ENCODE measurements at regions of chr19 and their contacts with region 1.

Region 1: DNA sequence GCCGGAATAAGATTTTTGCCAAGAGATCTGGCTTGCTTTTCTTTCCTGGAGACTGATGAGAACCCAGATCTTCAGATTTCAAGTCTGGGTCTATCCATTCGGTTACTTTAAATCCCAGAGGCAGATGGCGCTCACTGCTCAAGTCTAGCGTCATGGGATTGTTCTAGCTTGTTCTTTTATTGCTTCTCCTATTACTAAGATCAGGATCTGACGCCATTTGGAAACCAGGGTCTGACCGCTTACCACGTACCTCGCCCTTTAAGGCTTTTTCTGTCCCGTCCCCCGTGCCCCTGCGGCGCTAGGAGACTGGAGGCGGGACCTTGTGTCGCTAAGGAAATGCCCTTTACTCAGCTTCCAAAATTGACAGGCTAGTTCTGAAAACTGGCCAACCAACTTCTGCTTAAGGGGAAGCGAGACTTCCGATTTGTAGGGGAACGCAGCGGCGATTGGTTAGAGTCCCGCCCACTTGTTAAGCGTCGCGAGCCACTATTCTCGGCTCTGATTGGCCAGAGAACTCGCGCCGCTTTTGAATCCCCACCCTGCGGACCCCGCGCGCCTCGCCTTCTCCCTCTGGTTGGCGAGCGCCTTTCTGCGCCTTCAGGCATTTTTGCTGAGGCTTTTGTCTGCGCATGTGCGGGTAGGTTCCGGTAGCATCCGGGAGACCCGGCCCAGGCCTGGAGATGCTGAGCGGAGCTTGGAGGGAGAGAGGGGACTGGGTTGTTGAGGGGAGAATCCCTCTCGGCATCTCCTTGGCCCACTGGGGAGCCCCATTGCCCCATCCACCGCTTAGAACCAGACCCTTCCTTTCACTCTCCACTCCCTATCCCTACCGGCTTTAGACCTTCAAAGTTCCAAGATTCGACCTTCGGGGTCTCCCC is 3.8 kb upstream of the C19orf84 start:
- DNase-seq: peak; percentile 93

Region 2: DNA sequence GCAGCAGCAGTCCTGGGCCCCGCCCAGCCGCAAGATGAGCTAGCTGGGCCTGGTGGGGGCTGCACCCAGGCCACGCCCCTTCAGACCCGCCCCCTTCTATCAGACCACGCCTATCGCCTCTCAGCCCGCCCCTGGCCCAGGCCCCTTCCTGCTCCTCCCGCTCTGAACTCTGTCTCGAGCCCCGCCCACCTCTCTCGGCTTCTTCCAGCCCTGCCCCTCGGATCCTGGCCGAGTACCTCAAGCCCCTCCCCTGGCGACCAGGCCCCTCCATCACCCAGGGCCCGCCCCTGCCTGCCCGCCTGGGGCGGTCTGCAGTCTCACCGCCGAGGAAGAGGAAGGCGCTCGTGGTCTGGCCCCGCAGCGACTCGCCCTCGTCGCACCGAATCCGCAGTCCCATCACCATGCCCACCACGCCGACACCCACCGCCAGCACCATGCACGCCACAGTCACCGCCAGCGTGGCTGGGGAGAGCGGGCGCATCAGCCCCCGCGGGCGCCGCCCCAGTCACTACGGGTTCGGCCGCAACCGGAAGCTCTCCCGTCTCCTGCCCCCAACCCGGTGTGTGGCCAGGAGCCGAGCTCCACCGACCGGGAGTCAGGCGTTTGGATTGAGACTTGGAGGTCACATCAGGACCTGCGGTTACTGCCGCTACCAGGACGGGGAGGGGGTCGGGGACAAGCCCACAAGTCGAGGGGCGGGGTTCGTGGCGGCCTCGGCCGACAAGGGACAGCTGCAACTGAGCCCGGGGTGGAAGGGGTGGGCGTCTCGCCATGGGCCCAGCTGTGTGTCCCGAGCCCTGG is 26.4 kb before region 1 on chr19:
- CTCF ChIA-PET with region 1: no interaction called
- POLR2A ChIA-PET with region 1: interaction called, 19 read pairs
- DNase-seq: peak; percentile 96

Region 3: DNA sequence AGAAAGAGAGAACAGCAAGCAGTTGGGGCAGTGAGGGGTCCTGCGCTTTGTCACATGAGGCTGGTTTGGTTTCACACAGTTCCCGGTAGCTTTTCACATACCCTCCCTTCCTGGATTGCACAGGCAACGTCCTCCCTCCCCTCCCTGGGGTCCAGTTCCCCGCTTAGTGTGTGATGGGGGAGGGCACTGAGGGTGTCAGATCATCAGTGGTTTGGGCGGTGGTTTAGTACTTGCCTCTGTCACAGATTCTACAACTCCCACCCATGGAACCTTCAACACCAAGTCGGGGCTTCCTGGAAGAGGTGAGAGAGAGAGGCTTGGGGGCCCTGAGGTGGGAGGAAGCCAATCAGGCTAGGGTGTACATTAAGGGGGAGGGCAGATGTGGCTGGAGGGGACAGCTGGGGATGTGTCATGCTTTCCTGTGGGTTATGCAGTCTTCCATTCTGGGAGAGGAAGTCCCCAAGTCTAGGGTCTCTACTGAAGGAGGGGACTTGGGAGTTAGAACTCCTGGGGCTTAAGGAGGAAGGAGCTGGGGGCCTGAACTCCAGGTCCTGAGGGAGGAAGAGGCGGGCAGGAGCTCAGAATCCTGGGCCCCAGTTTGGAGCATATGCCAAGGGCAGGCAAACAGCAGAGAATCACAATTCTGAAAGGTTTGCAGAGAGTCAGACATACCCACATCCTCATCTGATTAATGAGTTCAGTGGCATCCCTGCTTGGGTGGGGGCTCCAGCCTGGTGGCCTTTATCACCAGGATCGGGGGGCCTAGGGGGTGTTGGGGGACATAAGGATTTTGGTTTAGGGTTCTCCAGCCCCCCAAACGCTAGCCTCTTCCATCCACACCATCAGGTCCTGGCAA is 21.3 kb before region 1 on chr19 and contains the start of gene NKG7:
- CTCF ChIA-PET with region 1: no interaction called
- POLR2A ChIA-PET with region 1: interaction called, 19 read pairs
- DNase-seq: no peak

Region 4: GRCh38 chr19:51441410-51442390 is 47.5 kb after region 1 on chr19:
- CTCF ChIA-PET with region 1: no interaction called
- POLR2A ChIA-PET with region 1: no interaction called
- DNase-seq: no peak